AG04450 (cell line): ENCODE measurements at regions of chr20 and their contacts with region 1.

Region 1: GRCh38 chr20:8853805-8854338 is 215.0 kb upstream of the PLCB4 start:
- DNase-seq: peak; percentile 64
- H3K4me3 ChIP-seq: peak overlapping the region; percentile 36
- H3K27ac ChIP-seq: peak overlapping the region; percentile 75
- H3K27me3 ChIP-seq: no peaks in the 10 kb centered on the region
- CTCF ChIP-seq: peak; percentile 91

Region 2: DNA sequence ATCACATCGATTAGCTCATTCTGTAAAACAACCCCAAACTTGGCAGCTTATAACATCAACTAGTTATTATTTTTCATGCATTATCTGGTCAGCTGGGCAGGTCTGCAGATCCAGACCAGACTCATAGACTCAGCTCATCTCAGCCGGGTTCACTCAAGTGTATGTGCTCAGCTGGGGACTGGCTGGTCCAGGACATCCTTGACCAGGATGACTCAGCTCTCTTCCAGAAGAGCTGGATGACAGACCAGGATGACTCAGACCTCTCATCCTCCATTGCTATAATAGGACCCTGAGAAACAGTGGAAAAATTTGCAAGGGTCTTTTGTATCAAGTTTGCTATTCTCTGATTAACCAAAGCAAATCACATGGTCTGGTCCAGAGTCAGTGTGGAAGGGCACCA is 97.5 kb before region 1 on chr20:
- CTCF ChIA-PET with region 1: interaction called, 10 read pairs
- POLR2A ChIA-PET with region 1: no interaction called
- DNase-seq: peak; percentile 57
- H3K4me3 ChIP-seq: no peak overlapping the region
- H3K27ac ChIP-seq: no peak overlapping the region
- H3K27me3 ChIP-seq: no peaks in the 10 kb centered on the region
- CTCF ChIP-seq: no peak

Region 3: DNA sequence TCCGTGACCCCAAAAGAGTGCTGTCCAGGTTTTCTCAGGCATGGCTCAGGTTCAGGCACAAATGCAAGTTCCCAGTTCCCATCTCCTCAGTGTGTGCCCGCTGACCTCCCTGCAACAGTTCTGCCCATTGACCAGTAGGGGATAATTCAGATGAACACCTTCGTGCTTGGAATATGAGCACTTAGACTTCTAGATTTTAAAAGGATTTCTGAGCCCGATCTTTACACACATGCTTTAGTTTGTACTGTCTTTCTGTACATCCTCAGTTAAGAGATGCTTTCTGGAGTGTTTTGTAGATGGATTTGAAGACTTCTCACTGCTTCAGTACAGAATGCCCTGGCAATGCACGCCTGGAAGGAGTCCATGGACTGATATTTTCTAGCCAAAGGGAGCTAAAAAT is 24.6 kb before region 1 on chr20:
- CTCF ChIA-PET with region 1: interaction called, 13 read pairs
- POLR2A ChIA-PET with region 1: no interaction called
- DNase-seq: no peak
- H3K4me3 ChIP-seq: no peak overlapping the region
- H3K27ac ChIP-seq: no peak overlapping the region
- H3K27me3 ChIP-seq: no peaks in the 10 kb centered on the region
- CTCF ChIP-seq: peak; percentile 31; the same call in 1 of the 2 replicates

Region 4: DNA sequence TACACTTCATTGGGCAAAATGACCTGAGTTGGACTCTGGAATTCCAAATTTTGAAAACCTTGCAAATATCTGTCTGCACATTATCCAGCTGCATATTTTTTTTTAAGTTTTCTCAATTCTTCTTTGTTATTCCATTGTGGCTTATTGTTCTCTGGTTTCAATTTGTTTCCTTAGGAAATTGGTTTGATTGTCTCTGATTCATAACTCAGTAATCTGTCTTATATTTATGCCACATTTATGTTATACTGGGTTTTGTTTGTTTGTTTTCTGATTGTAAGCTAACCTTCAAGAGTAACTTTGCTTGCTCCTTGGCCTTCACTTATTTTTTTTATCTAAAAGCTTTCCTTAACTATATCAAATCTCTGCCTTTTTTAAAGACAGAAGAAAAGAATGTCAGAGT is 21.7 kb after region 1 on chr20:
- CTCF ChIA-PET with region 1: interaction called, 17 read pairs
- POLR2A ChIA-PET with region 1: no interaction called
- DNase-seq: no peak
- H3K4me3 ChIP-seq: no peak overlapping the region
- H3K27ac ChIP-seq: no peak overlapping the region
- H3K27me3 ChIP-seq: no peaks in the 10 kb centered on the region
- CTCF ChIP-seq: no peak

Region 5: GRCh38 chr20:9110365-9110764 is 256.5 kb after region 1 on chr20:
- CTCF ChIA-PET with region 1: interaction called, 11 read pairs
- POLR2A ChIA-PET with region 1: interaction called, 4 read pairs
- DNase-seq: peak; percentile 18
- H3K4me3 ChIP-seq: no peak overlapping the region
- H3K27ac ChIP-seq: no peak overlapping the region
- H3K27me3 ChIP-seq: no peaks in the 10 kb centered on the region
- CTCF ChIP-seq: no peak

Region 6: GRCh38 chr20:9359561-9360308 is 505.9 kb after region 1 on chr20:
- CTCF ChIA-PET with region 1: interaction called, 17 read pairs
- POLR2A ChIA-PET with region 1: no interaction called
- DNase-seq: no peak
- H3K4me3 ChIP-seq: no peak overlapping the region
- H3K27ac ChIP-seq: no peak overlapping the region
- H3K27me3 ChIP-seq: no peaks in the 10 kb centered on the region
- CTCF ChIP-seq: peak; percentile 56